A673 (cell line): ENCODE measurements at regions of chr14 and their contacts with region 1.

Region 1: GRCh38 chr14:72315720-72316119 is 383.5 kb downstream of the RGS6 start:
- DNase-seq: no peak
- H3K4me3 ChIP-seq: no peak overlapping the region
- H3K27ac ChIP-seq: no peak overlapping the region
- H3K4me1 ChIP-seq: no peaks in the 10 kb centered on the region
- H3K27me3 ChIP-seq: no peaks in the 10 kb centered on the region
- CTCF ChIP-seq: no peak

Region 2: DNA sequence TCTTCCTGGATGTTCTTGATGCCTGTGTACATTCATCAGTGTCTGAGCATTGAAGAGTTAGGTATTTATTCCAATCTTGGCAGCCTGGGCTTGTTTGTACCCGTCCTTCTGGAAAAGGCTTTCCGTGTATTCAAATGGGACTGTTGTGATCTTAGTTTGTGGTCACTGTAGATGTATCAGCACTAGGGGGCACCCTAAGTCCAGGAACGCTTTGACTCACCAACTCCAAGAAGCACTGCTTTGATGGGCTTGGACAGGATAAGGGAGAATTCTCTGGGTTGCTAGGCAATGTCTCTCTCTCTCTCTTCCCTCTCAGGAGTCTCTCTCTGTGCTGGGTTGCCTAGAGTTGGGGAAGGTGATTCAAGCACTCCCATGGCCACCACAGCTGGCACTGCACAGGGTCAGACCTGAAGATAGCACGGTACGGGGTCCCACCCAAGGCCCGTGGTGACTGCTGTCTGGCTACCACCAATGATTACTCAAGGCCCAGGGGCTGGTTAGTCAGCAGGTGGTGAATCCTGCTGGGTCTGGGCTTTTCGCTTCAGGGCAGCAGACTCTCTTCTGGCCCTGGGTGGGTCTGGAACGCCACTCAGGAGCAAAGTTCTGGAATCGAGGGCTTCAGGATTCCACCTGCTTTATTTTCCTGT is 594.6 kb before region 1 on chr14:
- CTCF ChIA-PET with region 1: no interaction called
- POLR2A ChIA-PET with region 1: no interaction called
- intact Hi-C with region 1: no loop called
- DNase-seq: peak; percentile 86
- H3K4me3 ChIP-seq: no peak overlapping the region
- H3K27ac ChIP-seq: no peak overlapping the region
- H3K4me1 ChIP-seq: peaks cover 26% of the 10 kb centered on the region
- H3K27me3 ChIP-seq: no peaks in the 10 kb centered on the region
- CTCF ChIP-seq: peak; percentile 78

Region 3: GRCh38 chr14:72075649-72076334 is 239.9 kb before region 1 on chr14:
- CTCF ChIA-PET with region 1: no interaction called
- POLR2A ChIA-PET with region 1: interaction called, 15 read pairs
- intact Hi-C with region 1: no loop called
- DNase-seq: no peak
- H3K4me3 ChIP-seq: no peak overlapping the region
- H3K27ac ChIP-seq: no peak overlapping the region
- H3K4me1 ChIP-seq: no peaks in the 10 kb centered on the region
- H3K27me3 ChIP-seq: no peaks in the 10 kb centered on the region
- CTCF ChIP-seq: no peak

Region 4: GRCh38 chr14:73358187-73358586 is 1042.5 kb after region 1 on chr14:
- CTCF ChIA-PET with region 1: no interaction called
- POLR2A ChIA-PET with region 1: no interaction called
- intact Hi-C with region 1: no loop called
- DNase-seq: no peak
- H3K4me3 ChIP-seq: no peak overlapping the region
- H3K27ac ChIP-seq: no peak overlapping the region
- H3K4me1 ChIP-seq: no peaks in the 10 kb centered on the region
- H3K27me3 ChIP-seq: no peaks in the 10 kb centered on the region
- CTCF ChIP-seq: no peak